ENCODE measurements at regions of chr7 and their contacts with region 1.

Region 1: GRCh38 chr7:7201578-7202374 is 19.4 kb downstream of the C1GALT1 start:
- DNase-seq: peak; percentile 4 to 70 (median 49)
- ATAC-seq: peak; percentile 90
- H3K4me3 ChIP-seq: peak overlapping the region in 1 of 2 experiments; percentile 24
- H3K4me3 Mint-ChIP-seq: peak overlapping the region; percentile 67
- H3K27ac ChIP-seq: peak overlapping the region in 1 of 2 experiments; percentile 62
- H3K27ac Mint-ChIP-seq: peak overlapping the region; percentile 91
- H3K4me1 ChIP-seq: peaks cover 44% of the 10 kb centered on the region
- H3K4me1 Mint-ChIP-seq: peaks cover 80% of the 10 kb centered on the region
- H3K27me3 ChIP-seq: no peaks in the 10 kb centered on the region
- H3K27me3 Mint-ChIP-seq: no peaks in the 10 kb centered on the region
- CTCF ChIP-seq: no peak

Region 2: DNA sequence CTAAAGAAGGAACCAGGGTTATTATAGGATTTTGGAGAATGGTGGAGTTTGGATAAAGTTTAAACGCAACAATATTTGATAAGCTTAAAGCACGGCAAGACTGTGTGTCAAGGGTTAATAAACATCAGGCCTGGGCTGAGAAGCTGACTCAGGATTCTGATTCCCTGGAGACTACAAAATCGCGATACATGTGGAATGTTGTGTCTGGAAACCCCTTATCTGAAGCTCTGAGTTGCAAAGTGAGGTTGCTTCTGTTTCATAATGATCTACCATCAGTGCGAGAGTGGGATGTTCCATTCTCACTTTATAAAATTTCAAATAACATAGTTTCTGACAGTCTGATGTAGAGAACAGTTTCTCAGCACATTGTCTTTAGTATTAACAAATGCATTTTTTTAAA is 11.6 kb before region 1 on chr7:
- CTCF ChIA-PET with region 1: interaction called, 3 read pairs
- POLR2A ChIA-PET with region 1: no interaction called
- intact Hi-C with region 1: loop called in 1 of 2 experiments (anchors 2 kb)
- DNase-seq: no peak
- ATAC-seq: no peak
- H3K4me3 ChIP-seq: no peak overlapping the region
- H3K4me3 Mint-ChIP-seq: no peak overlapping the region
- H3K27ac ChIP-seq: no peak overlapping the region
- H3K27ac Mint-ChIP-seq: peak overlapping the region; percentile 46
- H3K4me1 ChIP-seq: peaks cover 53% of the 10 kb centered on the region
- H3K4me1 Mint-ChIP-seq: peaks cover 51% of the 10 kb centered on the region
- H3K27me3 ChIP-seq: no peaks in the 10 kb centered on the region
- H3K27me3 Mint-ChIP-seq: no peaks in the 10 kb centered on the region
- CTCF ChIP-seq: no peak

Region 3: GRCh38 chr7:7221602-7222038 is 19.8 kb after region 1 on chr7:
- CTCF ChIA-PET with region 1: no interaction called
- POLR2A ChIA-PET with region 1: interaction called, 4 read pairs
- intact Hi-C with region 1: loop called in 1 of 2 experiments (anchors 2 kb)
- DNase-seq: no peak
- ATAC-seq: no peak
- H3K4me3 ChIP-seq: no peak overlapping the region
- H3K4me3 Mint-ChIP-seq: no peak overlapping the region
- H3K27ac ChIP-seq: no peak overlapping the region
- H3K27ac Mint-ChIP-seq: peak overlapping the region; percentile 10
- H3K4me1 ChIP-seq: peaks cover 6% of the 10 kb centered on the region
- H3K4me1 Mint-ChIP-seq: peaks cover 50% of the 10 kb centered on the region
- H3K27me3 ChIP-seq: no peaks in the 10 kb centered on the region
- H3K27me3 Mint-ChIP-seq: no peaks in the 10 kb centered on the region
- CTCF ChIP-seq: no peak

Measured in CD8-positive, alpha-beta T cell (primary cell).